Activated T-helper 1 cell treated with anti-CD3 and anti-CD28 coated beads, Interleukin-12 subunit alpha, Interleukin-12 subunit beta, Interleukin-2, Interleukin-4 antibody, amounts not matched to agents 30 ng/mL and 10 ng/mL and 1 ng/mL, durations not matched to agents 14 hours and 24 hours and 36 hours (primary cell): ENCODE measurements at regions of chr2 and their contacts with region 1.

Region 1: DNA sequence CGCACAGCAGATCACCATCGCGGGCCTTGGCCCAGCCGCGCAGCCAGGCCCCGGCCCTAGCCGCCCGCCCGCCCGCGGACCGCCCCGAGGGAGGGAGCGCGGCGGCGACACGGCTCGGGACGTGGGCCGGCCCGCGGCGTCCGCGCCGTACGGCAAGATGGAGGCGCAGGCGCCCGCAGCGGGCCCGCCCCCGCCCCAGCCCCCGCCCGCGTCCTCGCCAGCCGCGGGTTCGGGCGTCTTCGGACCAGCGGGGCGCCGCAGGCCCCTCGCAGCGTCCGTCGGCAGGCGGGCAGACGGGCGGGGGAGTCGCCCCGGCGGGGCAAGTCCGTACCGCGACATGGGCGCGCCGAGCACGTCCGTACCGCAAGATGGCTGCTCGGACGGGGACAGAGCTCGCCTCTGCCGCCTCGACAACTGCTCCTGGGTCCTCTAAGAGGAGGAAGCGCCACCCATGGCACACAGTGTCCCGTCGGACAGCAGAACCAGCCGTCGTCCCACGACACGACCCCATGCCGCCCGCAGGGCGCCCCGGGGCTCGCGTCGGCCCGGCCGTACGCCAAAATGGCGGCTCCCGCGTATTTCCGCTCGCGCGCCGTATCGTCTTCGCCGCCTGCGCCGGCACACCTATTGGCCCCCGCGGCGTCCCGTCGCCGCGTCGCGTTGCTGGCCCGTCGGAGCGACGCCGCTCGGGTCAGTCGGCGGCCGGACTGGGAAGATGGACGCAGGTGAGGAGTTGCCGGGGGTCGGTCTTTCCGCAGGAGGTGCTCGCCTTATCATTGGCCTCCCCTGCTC is at the starts of genes ATG4B and THAP4:
- DNase-seq: peak; percentile 78
- H3K4me3 Mint-ChIP-seq: peak within 1 kb of the TSS; percentile 93
- H3K27ac Mint-ChIP-seq: peak within 1 kb of the TSS; percentile 93
- H3K4me1 Mint-ChIP-seq: peaks cover 44% of the 10 kb centered on the region
- H3K27me3 Mint-ChIP-seq: no peaks in the 10 kb centered on the region
- total RNA-seq, gene ATG4B: 116 and 126 TPM in 2 replicates
- total RNA-seq, gene THAP4: 53.1 and 58.5 TPM in 2 replicates

Region 2: GRCh38 chr2:241271641-241272297 is 365.4 kb before region 1 on chr2:
- intact Hi-C with region 1: loop called (anchors 2 kb)
- DNase-seq: peak; percentile 47
- H3K4me3 Mint-ChIP-seq: peak overlapping the region; percentile 92
- H3K27ac Mint-ChIP-seq: peak overlapping the region; percentile 86
- H3K4me1 Mint-ChIP-seq: peaks cover 29% of the 10 kb centered on the region
- H3K27me3 Mint-ChIP-seq: no peaks in the 10 kb centered on the region

Region 3: GRCh38 chr2:241540771-241541561 is 96.2 kb before region 1 on chr2:
- intact Hi-C with region 1: loop called (anchors 1 kb)
- DNase-seq: peak; percentile 59
- H3K4me3 Mint-ChIP-seq: peak overlapping the region; percentile 70
- H3K27ac Mint-ChIP-seq: no peak overlapping the region
- H3K4me1 Mint-ChIP-seq: no peaks in the 10 kb centered on the region
- H3K27me3 Mint-ChIP-seq: peaks cover 9% of the 10 kb centered on the region

Region 4: DNA sequence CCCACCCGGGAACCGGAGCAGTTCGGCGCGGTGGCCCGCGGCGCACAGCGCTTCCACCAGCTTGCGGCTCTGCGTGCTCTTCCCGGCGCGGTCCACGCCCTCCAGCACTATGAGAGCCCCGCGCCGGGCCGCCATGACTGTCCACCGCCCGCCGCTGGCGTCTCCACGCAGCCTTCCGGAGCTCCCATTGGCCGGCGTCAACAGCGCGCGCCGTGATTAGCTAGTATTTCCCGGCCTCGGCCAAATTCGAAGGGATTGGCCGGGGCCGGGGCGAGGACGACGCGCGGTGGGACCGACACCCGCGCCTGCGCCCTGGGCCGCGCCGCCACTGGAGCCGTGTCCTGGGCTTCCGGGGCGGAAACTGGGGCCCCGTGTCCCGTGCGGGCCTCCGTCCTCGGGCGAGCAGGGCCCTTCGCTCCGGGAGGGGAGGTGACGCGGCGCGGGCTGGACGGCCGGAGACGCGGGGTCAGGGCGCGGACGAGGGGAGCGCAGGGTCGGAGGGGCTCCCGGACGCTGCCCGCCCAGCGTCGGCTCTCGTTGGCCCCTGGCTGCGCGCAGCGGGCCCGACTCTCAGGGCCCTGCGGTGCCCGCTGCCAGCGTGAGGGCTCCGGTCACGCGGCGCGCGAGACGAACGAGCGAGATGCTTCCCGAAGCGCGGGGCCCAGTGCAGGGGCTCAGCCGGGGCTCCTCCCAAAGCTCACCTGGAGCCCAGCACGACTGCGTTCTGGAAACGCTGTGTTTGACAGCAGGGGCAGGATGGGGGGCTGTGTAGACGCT is 49.6 kb after region 1 on chr2 and contains the start of gene DTYMK:
- intact Hi-C with region 1: loop called (anchors 1 kb)
- DNase-seq: peak; percentile 97
- H3K4me3 Mint-ChIP-seq: peak within 1 kb of the TSS; percentile 96
- H3K27ac Mint-ChIP-seq: peak within 1 kb of the TSS; percentile 98
- H3K4me1 Mint-ChIP-seq: peaks cover 28% of the 10 kb centered on the region
- H3K27me3 Mint-ChIP-seq: no peaks in the 10 kb centered on the region
- total RNA-seq, gene DTYMK: 102 and 106 TPM in 2 replicates

Region 5: DNA sequence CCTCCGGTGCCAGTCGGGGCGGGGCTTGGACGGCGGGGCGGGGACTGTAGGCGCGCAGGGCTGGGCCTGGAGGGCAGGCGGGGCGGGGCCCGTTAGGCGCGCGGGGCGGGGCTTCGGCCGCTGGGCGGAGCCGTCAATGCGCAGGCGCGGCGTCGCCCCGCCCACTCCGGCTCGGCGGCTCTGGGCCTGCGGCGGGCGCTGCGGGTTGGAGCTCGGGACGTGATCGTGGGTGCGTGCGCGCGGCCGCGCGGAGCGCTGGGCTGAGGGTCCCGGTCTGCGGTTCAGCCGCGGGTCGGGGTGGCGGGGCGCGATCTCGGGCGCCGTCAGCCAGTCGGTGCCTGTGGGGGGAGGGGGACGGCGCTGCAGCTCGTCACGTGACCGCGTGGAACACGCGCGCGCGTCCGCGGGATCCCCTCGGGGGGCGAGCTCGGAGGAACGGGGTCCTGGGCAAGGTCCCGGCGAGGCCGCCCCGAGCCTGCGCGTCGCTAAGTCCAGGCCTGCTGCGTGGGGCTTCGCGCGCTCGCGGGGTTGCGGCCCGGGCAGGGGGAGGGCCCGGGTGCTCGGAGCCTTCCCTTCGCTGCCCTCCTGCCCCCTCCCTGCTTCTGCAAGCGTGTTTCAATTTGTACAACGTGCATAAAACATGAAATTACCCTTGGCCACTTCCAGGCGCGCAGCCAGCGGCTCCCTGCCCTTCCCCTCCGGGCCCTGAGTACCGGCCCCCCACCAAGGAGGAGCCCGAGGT is 97.4 kb after region 1 on chr2 and contains the start of gene D2HGDH:
- intact Hi-C with region 1: loop called (anchors 5 kb)
- DNase-seq: peak; percentile 89
- H3K4me3 Mint-ChIP-seq: peak within 1 kb of the TSS; percentile 82
- H3K27ac Mint-ChIP-seq: no peak within 1 kb of the TSS
- H3K4me1 Mint-ChIP-seq: peaks cover 41% of the 10 kb centered on the region
- H3K27me3 Mint-ChIP-seq: peaks cover 3% of the 10 kb centered on the region
- total RNA-seq, gene D2HGDH: 27.1 and 28.7 TPM in 2 replicates